Prostate gland (tissue), 2 donors: ENCODE measurements at regions of chr13 and their contacts with region 1.

Region 1: GRCh38 chr13:112643759-112644459 is 45.9 kb upstream of the ATP11A start:
- DNase-seq: no peak
- H3K4me3 ChIP-seq: no peak overlapping the region
- H3K27ac ChIP-seq: no peak overlapping the region
- H3K4me1 ChIP-seq: no peaks in the 10 kb centered on the region
- H3K27me3 ChIP-seq: no peaks in the 10 kb centered on the region
- CTCF ChIP-seq: no peak
- POLR2A ChIP-seq: no peak

Region 2: DNA sequence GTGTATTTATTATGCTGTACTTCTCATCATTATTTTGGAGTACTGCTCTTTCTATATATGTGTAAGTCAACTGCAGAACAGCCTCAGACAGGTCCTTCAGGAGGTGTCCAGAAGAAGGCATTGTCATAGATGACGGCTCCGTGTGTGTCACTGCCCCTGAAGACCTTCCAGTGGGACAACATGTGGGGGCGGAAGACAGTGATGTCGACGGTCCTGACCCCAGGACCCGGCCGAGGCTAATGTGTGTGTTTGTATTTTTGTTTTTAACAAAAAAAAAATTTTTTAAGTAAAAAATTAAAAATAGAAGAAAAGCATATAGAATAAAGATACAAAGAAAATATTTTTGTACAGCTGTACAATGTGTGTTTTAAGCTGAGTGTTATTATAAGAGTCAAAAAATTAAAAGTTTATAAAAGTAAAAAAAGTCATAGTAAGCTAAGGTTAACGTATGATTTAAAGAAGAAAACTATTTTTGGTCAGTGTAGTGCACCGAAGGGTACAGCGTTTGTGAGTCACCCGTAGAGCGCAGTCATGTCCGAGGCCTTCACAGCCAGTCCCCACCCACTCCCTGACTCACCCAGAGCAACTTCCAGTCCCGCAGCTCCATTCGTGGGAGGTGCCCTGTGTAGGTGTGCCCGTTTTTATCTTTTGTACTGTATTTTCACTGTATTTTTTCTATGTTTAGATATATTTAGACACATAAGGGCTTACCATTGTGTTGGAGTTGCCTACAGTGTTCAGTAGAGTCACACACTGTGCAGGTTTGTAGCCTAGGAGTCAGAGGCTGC is 310.0 kb before region 1 on chr13:
- intact Hi-C with region 1: no loop called
- DNase-seq: no peak
- H3K4me3 ChIP-seq: no peak overlapping the region
- H3K27ac ChIP-seq: no peak overlapping the region
- H3K4me1 ChIP-seq: no peaks in the 10 kb centered on the region
- H3K27me3 ChIP-seq: peaks cover 10% of the 10 kb centered on the region
- CTCF ChIP-seq: no peak
- POLR2A ChIP-seq: no peak

Region 3: DNA sequence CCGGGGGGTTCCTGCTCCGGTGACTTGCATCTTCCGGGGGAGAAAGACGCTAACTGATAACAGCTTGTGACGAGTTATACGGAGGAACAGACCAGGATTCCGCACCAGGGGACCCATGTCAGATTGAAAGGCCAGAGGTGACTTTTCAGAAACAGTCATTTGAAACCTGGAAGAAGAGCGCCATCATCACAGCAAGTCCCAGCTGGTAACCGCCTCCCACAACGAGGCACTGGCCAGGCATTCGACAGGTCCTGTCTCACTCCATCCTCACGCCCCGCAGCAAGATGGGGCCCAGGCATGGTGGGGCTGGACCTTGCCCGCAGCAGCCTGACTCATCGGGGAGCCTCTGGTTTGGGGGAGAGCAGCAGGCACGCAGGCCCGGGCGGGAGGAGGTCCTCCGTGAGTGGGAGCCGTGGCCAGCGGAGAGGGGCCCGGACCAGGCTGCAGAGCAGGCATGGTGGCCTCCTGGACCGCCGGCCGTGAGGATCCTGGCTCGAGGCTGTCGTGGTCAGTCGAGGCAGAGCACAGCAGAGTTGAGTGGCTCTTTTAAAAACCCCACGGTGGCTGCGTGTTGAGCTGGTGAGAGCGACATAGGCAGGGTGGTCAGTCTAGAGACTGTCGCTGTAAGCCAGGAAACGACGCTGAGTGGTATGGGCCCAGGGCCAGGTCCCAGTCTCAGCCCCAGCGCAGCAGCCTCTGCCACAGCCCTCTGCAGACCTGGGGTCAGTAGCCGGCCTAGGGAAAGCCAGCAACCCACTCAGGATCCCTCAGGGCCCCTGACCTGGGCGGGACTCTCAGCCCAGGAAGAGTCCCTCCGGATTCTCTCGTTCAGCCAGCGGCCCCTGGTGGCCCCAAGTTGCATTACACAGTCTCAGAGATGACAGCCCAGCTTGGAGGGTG is 230.2 kb after region 1 on chr13:
- intact Hi-C with region 1: loop called (anchors 5 kb)
- DNase-seq: peak; percentile 59
- H3K4me3 ChIP-seq: no peak overlapping the region
- H3K27ac ChIP-seq: no peak overlapping the region
- H3K4me1 ChIP-seq: no peaks in the 10 kb centered on the region
- H3K27me3 ChIP-seq: no peaks in the 10 kb centered on the region
- CTCF ChIP-seq: peak; percentile 75 to 89 (median 84)
- POLR2A ChIP-seq: no peak